ENCODE measurements at regions of chr1 and their contacts with region 1.

Region 1: GRCh38 chr1:60848583-60849188 is 233.7 kb upstream of the NFIA start:
- DNase-seq: peak in 1 of 2 experiments; percentile 8
- H3K4me3 ChIP-seq: no peak overlapping the region
- H3K27ac ChIP-seq: no peak overlapping the region
- H3K4me1 ChIP-seq: no peaks in the 10 kb centered on the region
- H3K27me3 ChIP-seq: no peaks in the 10 kb centered on the region
- CTCF ChIP-seq: peak; percentile 87

Region 2: DNA sequence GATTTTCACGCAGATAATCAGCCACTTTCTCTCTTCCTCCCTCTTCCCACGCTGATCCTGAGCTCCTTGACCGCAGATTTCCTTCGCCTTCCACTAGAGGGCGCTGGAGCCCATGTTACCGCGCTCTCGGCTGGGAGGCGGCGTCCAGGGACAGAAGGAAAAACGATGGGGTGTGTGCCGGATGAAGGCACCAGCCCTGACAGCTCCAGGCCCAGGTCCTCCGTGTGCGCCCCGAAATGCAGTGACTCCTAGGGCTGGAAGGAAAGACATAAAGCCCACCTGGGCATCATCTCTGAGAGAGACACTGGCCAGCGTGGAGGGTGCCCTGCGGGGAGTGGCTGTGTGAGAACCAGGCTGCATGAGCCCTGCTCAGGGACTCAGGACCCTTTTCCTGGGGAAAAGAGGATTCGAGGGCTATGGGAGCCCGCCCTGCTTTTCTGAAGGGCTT is 877.2 kb before region 1 on chr1:
- CTCF ChIA-PET with region 1: no interaction called
- POLR2A ChIA-PET with region 1: no interaction called
- intact Hi-C with region 1: loop called (anchors 10 kb)
- DNase-seq: peak; percentile 50 to 74
- H3K4me3 ChIP-seq: no peak overlapping the region
- H3K27ac ChIP-seq: no peak overlapping the region
- H3K4me1 ChIP-seq: no peaks in the 10 kb centered on the region
- H3K27me3 ChIP-seq: 0 out of 2 replicates have a peak, but pooled peaks cover 4% of the 10 kb centered on the region
- CTCF ChIP-seq: peak; percentile 94

Region 3: DNA sequence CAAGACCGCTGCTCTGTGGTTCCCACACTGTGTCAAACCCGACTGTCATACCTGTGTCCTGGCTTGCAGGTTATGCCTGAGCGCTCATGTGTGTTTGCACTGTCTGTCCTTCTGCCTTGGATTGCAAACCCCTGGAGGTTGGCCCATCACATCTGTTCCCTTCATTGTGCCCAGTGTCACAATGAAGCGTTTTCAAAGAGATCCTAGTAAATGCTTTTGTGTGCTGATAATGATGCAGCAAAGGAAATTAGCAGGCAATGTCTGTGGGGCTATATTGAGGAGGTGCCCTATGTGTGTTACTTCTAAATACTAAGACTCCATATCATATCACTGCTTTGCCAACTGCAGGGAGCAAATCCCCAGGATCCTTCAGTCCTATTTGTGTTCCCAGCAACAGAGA is 190.8 kb before region 1 on chr1:
- CTCF ChIA-PET with region 1: no interaction called
- POLR2A ChIA-PET with region 1: no interaction called
- intact Hi-C with region 1: no loop called
- DNase-seq: no peak
- H3K4me3 ChIP-seq: no peak overlapping the region
- H3K27ac ChIP-seq: no peak overlapping the region
- H3K4me1 ChIP-seq: no peaks in the 10 kb centered on the region
- H3K27me3 ChIP-seq: no peaks in the 10 kb centered on the region
- CTCF ChIP-seq: no peak

Region 4: GRCh38 chr1:60797351-60797750 is 51.3 kb before region 1 on chr1:
- CTCF ChIA-PET with region 1: no interaction called
- POLR2A ChIA-PET with region 1: no interaction called
- intact Hi-C with region 1: no loop called
- DNase-seq: no peak
- H3K4me3 ChIP-seq: no peak overlapping the region
- H3K27ac ChIP-seq: no peak overlapping the region
- H3K4me1 ChIP-seq: no peaks in the 10 kb centered on the region
- H3K27me3 ChIP-seq: 0 out of 2 replicates have a peak, but pooled peaks cover 5% of the 10 kb centered on the region
- CTCF ChIP-seq: no peak

Region 5: GRCh38 chr1:60942896-60943638 is 94.4 kb after region 1 on chr1:
- CTCF ChIA-PET with region 1: no interaction called
- POLR2A ChIA-PET with region 1: no interaction called
- intact Hi-C with region 1: no loop called
- DNase-seq: peak in 1 of 2 experiments; percentile 12
- H3K4me3 ChIP-seq: no peak overlapping the region
- H3K27ac ChIP-seq: peak overlapping the region; percentile 54
- H3K4me1 ChIP-seq: peaks cover 29% of the 10 kb centered on the region
- H3K27me3 ChIP-seq: no peaks in the 10 kb centered on the region
- CTCF ChIP-seq: no peak

Region 6: GRCh38 chr1:61043010-61043820 is 194.5 kb after region 1 on chr1:
- CTCF ChIA-PET with region 1: interaction called, 9 read pairs
- POLR2A ChIA-PET with region 1: no interaction called
- intact Hi-C with region 1: loop called (anchors 1 kb)
- DNase-seq: peak; percentile 40 to 90
- H3K4me3 ChIP-seq: peak overlapping the region; percentile 59
- H3K27ac ChIP-seq: no peak overlapping the region
- H3K4me1 ChIP-seq: no peaks in the 10 kb centered on the region
- H3K27me3 ChIP-seq: no peaks in the 10 kb centered on the region
- CTCF ChIP-seq: peak; percentile 81

Region 7: GRCh38 chr1:61253059-61253735 is 404.5 kb after region 1 on chr1:
- CTCF ChIA-PET with region 1: interaction called, 13 read pairs
- POLR2A ChIA-PET with region 1: no interaction called
- intact Hi-C with region 1: no loop called
- DNase-seq: peak; percentile 66 to 81
- H3K4me3 ChIP-seq: no peak overlapping the region
- H3K27ac ChIP-seq: peak overlapping the region; percentile 36; the same call in 1 of the 2 replicates
- H3K4me1 ChIP-seq: peaks cover 22% of the 10 kb centered on the region
- H3K27me3 ChIP-seq: no peaks in the 10 kb centered on the region
- CTCF ChIP-seq: no peak

Region 8: GRCh38 chr1:61825393-61825792 is 976.7 kb after region 1 on chr1:
- CTCF ChIA-PET with region 1: interaction called, 18 read pairs
- POLR2A ChIA-PET with region 1: no interaction called
- intact Hi-C with region 1: no loop called
- DNase-seq: no peak
- H3K4me3 ChIP-seq: no peak overlapping the region
- H3K27ac ChIP-seq: no peak overlapping the region
- H3K4me1 ChIP-seq: no peaks in the 10 kb centered on the region
- H3K27me3 ChIP-seq: no peaks in the 10 kb centered on the region
- CTCF ChIP-seq: no peak

Region 9: GRCh38 chr1:61851849-61852669 is 1003.4 kb after region 1 on chr1:
- CTCF ChIA-PET with region 1: no interaction called
- POLR2A ChIA-PET with region 1: no interaction called
- intact Hi-C with region 1: loop called (anchors 5 kb)
- DNase-seq: peak in 1 of 2 experiments; percentile 37
- H3K4me3 ChIP-seq: no peak overlapping the region
- H3K27ac ChIP-seq: no peak overlapping the region
- H3K4me1 ChIP-seq: no peaks in the 10 kb centered on the region
- H3K27me3 ChIP-seq: no peaks in the 10 kb centered on the region
- CTCF ChIP-seq: peak; percentile 78

Measured in PC-9 (cell line).